OCI-LY7 (cell line): ENCODE measurements at regions of chr1 and their contacts with region 1.

Region 1: GRCh38 chr1:160428655-160429054 is 28.3 kb downstream of the VANGL2 start:
- DNase-seq: peak; percentile 81
- H3K4me3 ChIP-seq: peak overlapping the region; percentile 24
- H3K27ac ChIP-seq: peak overlapping the region; percentile 87
- H3K4me1 ChIP-seq: peaks cover 52% of the 10 kb centered on the region
- CTCF ChIP-seq: peak; percentile 99

Region 2: DNA sequence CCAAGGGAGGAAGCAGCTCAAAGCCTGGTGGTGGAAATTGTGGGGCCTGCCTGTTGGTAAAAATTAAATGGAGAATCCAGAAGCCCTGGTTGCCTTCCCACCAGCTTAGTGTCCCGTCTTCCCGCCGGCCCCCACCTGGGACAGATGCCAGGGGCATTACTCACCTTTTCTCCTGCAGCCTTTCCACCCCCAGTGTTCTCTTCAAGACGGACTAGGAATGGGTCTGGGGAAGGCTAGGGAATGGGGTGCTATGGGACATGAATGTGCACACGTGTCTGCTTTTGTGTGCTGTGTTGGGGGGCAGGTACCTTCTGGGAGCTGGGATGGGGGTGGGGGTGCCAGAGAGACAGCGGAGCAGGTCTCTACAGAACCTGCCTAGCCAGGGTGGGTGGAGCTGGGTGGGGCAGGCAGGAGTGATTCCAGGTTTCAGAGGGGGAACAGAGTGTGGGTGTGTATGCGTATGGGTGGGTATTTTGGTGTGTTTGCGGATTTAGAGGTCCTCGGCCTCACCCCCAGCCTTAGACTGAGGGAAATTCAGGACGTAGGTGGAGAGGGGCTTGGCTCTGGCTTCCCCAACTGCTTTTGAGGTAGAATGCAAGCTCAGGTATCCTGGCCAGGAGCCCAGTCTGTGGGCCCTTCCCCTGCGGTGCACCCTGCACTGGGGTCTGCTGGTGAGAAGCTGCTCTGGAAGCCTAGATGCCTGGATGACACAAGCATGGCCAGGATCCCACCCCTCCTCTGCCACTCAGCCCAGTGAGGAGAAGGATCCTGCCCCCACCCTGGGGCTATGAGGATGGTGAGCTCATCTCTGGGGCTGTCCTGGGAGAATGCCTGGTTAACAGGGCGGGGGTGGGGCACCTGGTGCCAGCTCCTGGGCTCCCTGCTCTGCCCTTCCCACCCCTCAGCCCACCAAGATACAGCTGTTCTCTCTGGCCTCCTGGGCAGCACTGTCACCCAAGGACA is 20.5 kb before region 1 on chr1:
- CTCF ChIA-PET with region 1: no interaction called
- POLR2A ChIA-PET with region 1: no interaction called
- intact Hi-C with region 1: no loop called
- DNase-seq: no peak
- H3K4me3 ChIP-seq: no peak overlapping the region
- H3K27ac ChIP-seq: no peak overlapping the region
- H3K4me1 ChIP-seq: peaks cover 8% of the 10 kb centered on the region
- CTCF ChIP-seq: no peak

Region 3: GRCh38 chr1:160489513-160490261 is 61.0 kb after region 1 on chr1:
- CTCF ChIA-PET with region 1: interaction called, 5 read pairs
- POLR2A ChIA-PET with region 1: interaction called, 13 read pairs
- intact Hi-C with region 1: loop called (anchors 1 kb)
- DNase-seq: peak; percentile 52
- H3K4me3 ChIP-seq: peak overlapping the region; percentile 22
- H3K27ac ChIP-seq: peak overlapping the region; percentile 97
- H3K4me1 ChIP-seq: peaks cover 75% of the 10 kb centered on the region
- CTCF ChIP-seq: no peak

Region 4: DNA sequence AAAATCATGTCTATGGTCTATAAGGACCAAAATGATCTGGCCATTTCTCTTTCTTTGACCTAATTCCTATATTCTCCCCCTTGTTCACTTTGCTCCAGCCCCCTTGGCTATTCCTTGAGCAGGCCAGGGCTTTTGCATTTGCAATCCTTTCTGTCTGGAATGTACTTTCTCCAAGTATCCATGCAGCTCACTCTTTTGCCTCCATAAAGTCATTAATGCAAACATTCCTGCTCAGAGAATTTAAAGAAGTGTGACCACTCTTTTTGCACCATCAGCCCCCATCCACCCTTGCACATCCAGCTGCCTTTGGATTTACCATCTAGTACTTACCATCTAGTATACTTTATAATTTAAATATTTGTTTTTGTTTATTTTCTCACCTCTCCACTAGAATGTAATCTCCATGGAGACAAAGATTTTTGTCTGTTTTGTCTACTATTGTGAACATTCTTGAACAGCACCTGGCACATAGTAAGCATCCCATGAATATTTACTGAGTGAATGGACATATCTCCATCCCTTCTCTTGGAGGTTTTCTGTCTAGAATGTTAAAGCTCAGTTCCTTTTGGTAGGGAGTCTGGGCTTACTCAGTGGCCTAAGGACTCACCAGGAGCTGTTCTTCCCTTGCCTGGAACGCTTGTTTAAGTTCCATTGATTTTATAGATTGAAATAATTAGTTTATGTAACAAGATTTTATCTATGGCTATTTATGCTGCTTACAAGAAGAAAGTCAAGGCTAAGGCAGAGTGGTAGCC is 71.8 kb after region 1 on chr1:
- CTCF ChIA-PET with region 1: no interaction called
- POLR2A ChIA-PET with region 1: no interaction called
- intact Hi-C with region 1: no loop called
- DNase-seq: no peak
- H3K4me3 ChIP-seq: no peak overlapping the region
- H3K27ac ChIP-seq: no peak overlapping the region
- H3K4me1 ChIP-seq: no peaks in the 10 kb centered on the region
- CTCF ChIP-seq: no peak

Region 5: GRCh38 chr1:160539990-160540858 is 111.6 kb after region 1 on chr1:
- CTCF ChIA-PET with region 1: no interaction called
- POLR2A ChIA-PET with region 1: interaction called, 3 read pairs
- intact Hi-C with region 1: loop called (anchors 1 kb)
- DNase-seq: peak; percentile 85
- H3K4me3 ChIP-seq: peak overlapping the region; percentile 35
- H3K27ac ChIP-seq: peak overlapping the region; percentile 85
- H3K4me1 ChIP-seq: peaks cover 58% of the 10 kb centered on the region
- CTCF ChIP-seq: no peak

Region 6: DNA sequence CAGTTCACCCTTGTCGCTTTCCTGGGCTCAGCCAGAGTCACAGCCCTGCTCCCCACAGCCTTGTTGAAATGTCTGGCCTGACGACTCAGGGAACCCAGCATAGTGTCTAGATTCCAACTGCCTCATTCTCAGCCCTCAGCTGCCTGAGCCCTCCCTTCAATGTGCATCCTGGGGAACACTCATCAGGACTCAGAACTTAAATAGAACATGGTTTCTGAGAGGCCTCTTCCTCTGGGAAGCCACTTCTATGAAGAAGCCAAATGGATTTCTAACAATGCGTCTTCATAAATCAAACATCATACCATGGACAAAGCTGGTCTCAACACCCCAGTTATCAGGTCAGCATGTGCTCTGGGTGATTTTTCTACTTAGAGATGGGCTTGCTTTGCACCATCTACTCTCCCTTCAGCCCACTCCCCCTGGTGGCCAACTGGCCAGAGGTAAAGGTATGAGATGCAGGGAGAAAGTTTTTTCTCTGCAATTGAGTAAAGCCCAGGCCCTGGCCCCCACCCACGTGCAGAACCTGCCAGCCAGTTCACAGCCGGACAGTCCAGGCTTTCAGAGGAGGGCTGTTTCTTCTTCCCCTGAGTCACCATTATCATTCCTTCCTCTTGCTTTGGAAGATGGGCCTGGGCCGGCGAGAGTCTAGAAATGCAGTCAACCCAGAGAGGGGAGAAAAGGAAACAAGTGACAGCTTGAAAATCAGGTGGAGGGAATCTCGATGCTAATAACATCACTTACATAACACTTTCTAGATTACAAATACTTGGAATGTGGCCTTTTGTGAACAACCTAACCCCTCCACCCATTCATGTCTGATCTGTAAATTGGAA is 401.9 kb after region 1 on chr1:
- CTCF ChIA-PET with region 1: no interaction called
- POLR2A ChIA-PET with region 1: no interaction called
- intact Hi-C with region 1: loop called (anchors 10 kb)
- DNase-seq: peak; percentile 80
- H3K4me3 ChIP-seq: no peak overlapping the region
- H3K27ac ChIP-seq: no peak overlapping the region
- H3K4me1 ChIP-seq: no peaks in the 10 kb centered on the region
- CTCF ChIP-seq: peak; percentile 92